ENCODE measurements at regions of chr6 and their contacts with region 1.

Region 1: DNA sequence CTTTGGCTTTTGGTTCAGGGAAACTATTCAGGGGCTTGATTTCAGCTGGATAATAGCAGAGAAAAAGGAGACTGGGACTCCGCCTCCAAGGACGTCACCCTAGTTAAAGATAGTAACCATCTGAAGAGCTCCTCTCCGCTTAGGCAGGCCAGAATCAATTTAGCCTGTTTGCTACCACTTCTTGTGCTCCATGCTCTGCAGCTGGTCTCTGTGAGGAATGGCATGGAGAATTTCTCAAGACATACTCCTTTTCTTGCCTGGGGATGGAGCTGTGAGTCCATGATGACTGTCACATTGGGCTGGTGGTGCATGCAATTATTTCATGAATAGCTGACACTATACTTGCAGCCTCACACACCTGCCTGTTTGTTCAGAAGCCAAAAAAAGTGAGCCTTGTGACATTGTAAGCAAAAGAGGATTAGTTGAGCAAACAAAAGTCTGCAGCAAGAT is 61.4 kb downstream of the TXLNB start:
- DNase-seq: no peak
- ATAC-seq: no peak
- H3K4me3 ChIP-seq: no peak overlapping the region
- H3K27ac ChIP-seq: no peak overlapping the region
- H3K4me1 ChIP-seq: no peaks in the 10 kb centered on the region
- H3K27me3 ChIP-seq: no peaks in the 10 kb centered on the region
- CTCF ChIP-seq: peak; percentile 30

Region 2: DNA sequence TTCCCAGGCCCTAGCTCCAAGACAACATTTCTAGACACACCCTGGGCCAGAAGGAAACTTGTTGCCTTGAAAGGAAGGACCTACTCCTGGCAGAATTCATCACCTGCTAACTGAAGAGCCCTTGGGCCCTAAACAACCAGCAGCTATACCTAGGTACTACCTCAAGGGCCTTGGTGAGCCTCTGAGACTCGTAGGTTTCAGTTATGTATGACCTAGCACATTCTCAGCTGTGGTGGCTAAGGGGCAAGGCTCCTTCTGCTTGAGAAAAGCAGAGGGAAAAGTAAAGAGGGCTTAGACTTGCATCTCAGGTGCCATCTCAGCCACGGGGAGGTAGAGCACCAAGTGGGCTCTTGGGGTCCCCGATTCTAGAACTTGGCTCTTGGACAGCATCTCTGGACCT is 598.9 kb before region 1 on chr6:
- CTCF ChIA-PET with region 1: no interaction called
- POLR2A ChIA-PET with region 1: no interaction called
- in situ Hi-C with region 1: no loop called
- intact Hi-C with region 1: no loop called
- DNase-seq: no peak
- ATAC-seq: no peak
- H3K4me3 ChIP-seq: no peak overlapping the region
- H3K27ac ChIP-seq: no peak overlapping the region
- H3K4me1 ChIP-seq: no peaks in the 10 kb centered on the region
- H3K27me3 ChIP-seq: no peaks in the 10 kb centered on the region
- CTCF ChIP-seq: no peak

Region 3: DNA sequence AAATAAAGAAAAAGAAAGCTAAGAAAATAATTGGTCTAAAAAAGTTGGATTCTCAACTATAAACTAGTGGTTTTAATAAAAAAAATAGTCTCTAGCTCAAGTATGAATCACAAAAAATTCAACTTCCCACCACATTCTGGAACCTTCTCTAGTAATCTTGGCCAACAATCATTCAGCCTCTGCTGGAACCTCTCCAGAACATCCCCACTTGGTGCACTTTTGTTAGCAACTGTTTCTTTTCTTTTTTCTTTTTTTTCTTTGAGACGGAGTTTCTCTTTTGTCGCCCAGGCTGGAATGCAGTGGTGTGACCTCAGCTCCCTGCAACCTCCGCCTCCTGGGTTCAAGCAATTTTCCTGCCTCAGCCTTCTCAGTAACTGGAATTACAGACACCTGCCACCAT is 25.7 kb after region 1 on chr6:
- CTCF ChIA-PET with region 1: no interaction called
- POLR2A ChIA-PET with region 1: no interaction called
- in situ Hi-C with region 1: no loop called
- intact Hi-C with region 1: no loop called
- DNase-seq: no peak
- ATAC-seq: no peak
- H3K4me3 ChIP-seq: no peak overlapping the region
- H3K27ac ChIP-seq: no peak overlapping the region
- H3K4me1 ChIP-seq: no peaks in the 10 kb centered on the region
- H3K27me3 ChIP-seq: no peaks in the 10 kb centered on the region
- CTCF ChIP-seq: no peak

Region 4: DNA sequence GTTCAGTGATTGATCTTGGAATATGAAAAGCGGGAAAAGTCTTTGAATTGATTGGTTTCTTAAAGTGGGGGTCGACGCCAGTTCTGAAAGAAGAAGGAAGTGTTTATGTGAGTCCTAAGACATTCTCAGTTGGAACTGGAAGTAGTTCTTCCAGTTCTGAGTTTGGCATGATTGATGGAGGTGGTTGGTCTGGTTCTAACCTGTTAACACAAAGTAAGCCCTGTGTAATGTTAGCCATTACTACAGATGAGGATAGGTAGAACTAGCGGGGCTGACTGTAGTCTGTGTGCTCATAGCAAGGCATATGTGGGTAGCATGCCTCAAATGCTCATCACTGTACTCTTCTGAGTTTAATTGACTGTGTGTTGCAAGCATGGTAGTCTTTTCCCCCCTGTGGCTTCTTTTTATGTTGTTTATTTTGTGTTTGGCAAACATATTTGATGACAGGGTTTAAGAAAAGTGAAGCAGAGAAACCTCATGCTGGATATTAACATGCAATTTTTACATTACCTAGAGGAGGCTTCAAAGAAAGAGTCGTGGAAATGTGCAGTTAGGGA is 119.1 kb after region 1 on chr6:
- CTCF ChIA-PET with region 1: no interaction called
- POLR2A ChIA-PET with region 1: no interaction called
- in situ Hi-C with region 1: no loop called
- intact Hi-C with region 1: loop called (anchors 10 kb)
- DNase-seq: no peak
- ATAC-seq: no peak
- H3K4me3 ChIP-seq: no peak overlapping the region
- H3K27ac ChIP-seq: no peak overlapping the region
- H3K4me1 ChIP-seq: no peaks in the 10 kb centered on the region
- H3K27me3 ChIP-seq: no peaks in the 10 kb centered on the region
- CTCF ChIP-seq: no peak

Measured in Panc1 (cell line).